ENCODE measurements at regions of chr6 and their contacts with region 1.

Region 1: GRCh38 chr6:47413752-47414422 is 63.7 kb upstream of the CD2AP start:
- DNase-seq: no peak
- ATAC-seq: peak; percentile 95

Region 2: GRCh38 chr6:47603995-47604394 is 190.1 kb after region 1 on chr6:
- intact Hi-C with region 1: loop called (anchors 10 kb)
- DNase-seq: no peak
- ATAC-seq: peak; percentile 55